ENCODE measurements at regions of chr15 and their contacts with region 1.

Region 1: DNA sequence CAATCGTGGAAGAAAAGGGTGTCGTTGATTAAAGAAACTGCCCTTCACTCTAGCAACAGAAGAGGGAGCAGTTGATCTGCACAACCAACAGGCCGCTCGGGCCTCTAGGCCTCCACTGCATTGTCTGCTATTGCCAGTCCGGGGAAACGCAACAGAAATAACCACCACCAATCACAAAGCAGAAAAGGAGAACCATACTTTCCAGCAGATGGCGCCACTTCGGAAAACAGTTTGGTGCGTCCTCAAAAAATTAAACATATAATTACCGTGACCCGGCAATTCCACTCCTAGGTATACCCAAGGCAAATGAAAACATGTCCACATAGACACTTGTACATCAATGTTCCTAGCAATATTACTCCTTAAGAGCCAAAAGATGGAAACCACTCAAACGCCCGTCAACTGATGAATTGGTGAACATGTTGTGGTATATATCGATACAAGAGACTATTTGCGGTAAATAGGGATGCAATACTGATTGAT is 154.1 kb downstream of the TJP1 start:
- DNase-seq: peak; percentile 80 to 84
- H3K4me3 ChIP-seq: no peak overlapping the region
- H3K27ac ChIP-seq: no peak overlapping the region
- H3K4me1 ChIP-seq: peaks cover 0 to 14% of the 10 kb centered on the region in 2 donors
- H3K27me3 ChIP-seq: no peaks in the 10 kb centered on the region
- CTCF ChIP-seq: peak; percentile 38 to 97 (median 81)
- POLR2A ChIP-seq: no peak

Region 2: GRCh38 chr15:29935276-29936020 is 267.3 kb after region 1 on chr15:
- intact Hi-C with region 1: loop called (anchors 10 kb)
- DNase-seq: peak; percentile 10 to 27
- H3K4me3 ChIP-seq: no peak overlapping the region
- H3K27ac ChIP-seq: no peak overlapping the region
- H3K4me1 ChIP-seq: no peaks in the 10 kb centered on the region
- H3K27me3 ChIP-seq: no peaks in the 10 kb centered on the region
- CTCF ChIP-seq: peak in 3 of 6 experiments; percentile 22 to 33 (median 32)
- POLR2A ChIP-seq: no peak

Measured in thyroid gland (tissue), 4 donors.